MCF 10A (cell line): ENCODE measurements at regions of chr3 and their contacts with region 1.

Region 1: GRCh38 chr3:54374214-54374855 is 252.0 kb downstream of the CACNA2D3 start:
- DNase-seq: peak; percentile 51
- H3K4me3 Mint-ChIP-seq: no peak overlapping the region
- H3K27ac Mint-ChIP-seq: no peak overlapping the region
- H3K4me1 Mint-ChIP-seq: no peaks in the 10 kb centered on the region
- H3K27me3 Mint-ChIP-seq: peaks cover 15% of the 10 kb centered on the region
- CTCF ChIP-seq: peak; percentile 55

Region 2: DNA sequence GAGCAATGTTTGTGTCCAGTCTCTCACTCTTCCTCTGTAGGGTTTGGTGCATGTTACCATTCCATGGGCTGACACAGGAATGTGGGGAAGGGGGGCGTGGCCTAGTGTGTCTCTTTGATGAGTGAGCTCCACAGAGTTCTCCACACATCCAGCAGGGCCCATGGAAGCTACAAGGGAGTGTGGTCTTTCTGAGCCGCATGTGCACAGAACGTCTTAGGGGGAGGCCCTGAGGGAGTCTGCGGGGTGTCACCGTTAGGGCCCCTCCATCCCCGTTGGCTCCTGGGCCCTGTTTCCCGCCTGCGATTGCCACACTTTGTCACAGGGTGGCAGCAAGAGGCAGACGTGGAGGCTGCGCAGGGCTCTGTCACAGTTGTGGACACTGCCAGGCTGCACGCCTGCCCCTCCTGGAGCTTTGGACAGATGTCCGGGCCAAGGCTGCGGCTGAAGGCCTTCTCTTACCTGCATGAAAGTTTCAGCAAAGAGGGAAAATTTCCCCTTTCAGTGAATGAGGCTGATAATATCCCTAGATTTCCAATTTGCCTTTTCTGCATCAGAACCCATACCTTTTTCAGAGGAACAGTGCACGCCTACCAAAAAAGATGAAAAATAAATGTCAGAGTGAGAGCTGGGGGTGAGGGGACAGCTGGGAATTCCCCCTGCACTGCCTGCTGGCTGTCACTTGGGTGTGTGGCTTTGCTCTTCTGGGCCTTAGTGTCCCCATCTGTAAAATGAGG is 227.7 kb before region 1 on chr3:
- CTCF ChIA-PET with region 1: interaction called, 18 read pairs
- POLR2A ChIA-PET with region 1: no interaction called
- intact Hi-C with region 1: no loop called
- DNase-seq: peak; percentile 40
- H3K4me3 Mint-ChIP-seq: no peak overlapping the region
- H3K27ac Mint-ChIP-seq: no peak overlapping the region
- H3K4me1 Mint-ChIP-seq: no peaks in the 10 kb centered on the region
- H3K27me3 Mint-ChIP-seq: peaks cover 40% of the 10 kb centered on the region
- CTCF ChIP-seq: peak; percentile 63

Region 3: DNA sequence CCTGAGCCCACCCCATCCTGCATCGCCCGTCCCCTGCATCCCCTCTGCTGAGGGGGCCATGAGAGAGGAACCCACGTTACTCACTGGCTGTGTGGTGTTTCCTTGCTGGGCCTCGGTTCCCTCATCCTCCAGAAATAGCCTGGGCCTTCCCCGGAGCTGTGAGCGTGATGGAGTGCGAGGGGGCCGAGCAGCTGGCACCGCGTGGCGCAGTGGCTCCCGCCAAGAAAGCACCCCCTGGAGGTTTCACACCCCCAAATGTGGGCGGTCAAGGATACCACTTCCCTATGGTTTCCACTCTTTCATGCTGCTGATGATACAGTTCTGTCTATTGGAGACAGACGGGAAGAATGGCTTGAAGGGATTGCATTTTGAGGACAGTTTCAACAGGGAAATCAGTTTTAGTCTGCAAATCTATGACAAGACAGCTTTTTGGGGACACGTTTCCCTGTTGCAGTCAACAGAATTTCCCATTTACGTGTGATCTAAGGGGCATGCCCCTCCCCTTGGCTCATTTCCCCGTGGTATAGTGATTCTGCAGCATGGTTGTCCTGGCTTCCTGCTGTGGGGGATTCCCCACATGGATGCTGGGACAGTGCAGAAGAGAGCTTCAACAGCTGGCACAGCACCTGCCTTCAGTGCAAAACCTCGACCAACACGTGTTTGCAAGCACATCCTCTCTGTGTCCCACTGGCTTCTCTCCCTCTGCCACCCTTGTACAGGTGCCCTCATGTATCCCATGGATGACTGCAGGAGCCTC is 176.1 kb after region 1 on chr3:
- CTCF ChIA-PET with region 1: no interaction called
- POLR2A ChIA-PET with region 1: no interaction called
- intact Hi-C with region 1: no loop called
- DNase-seq: no peak
- H3K4me3 Mint-ChIP-seq: no peak overlapping the region
- H3K27ac Mint-ChIP-seq: no peak overlapping the region
- H3K4me1 Mint-ChIP-seq: no peaks in the 10 kb centered on the region
- H3K27me3 Mint-ChIP-seq: no peaks in the 10 kb centered on the region
- CTCF ChIP-seq: no peak